ENCODE measurements at regions of chr14 and their contacts with region 1.

Region 1: DNA sequence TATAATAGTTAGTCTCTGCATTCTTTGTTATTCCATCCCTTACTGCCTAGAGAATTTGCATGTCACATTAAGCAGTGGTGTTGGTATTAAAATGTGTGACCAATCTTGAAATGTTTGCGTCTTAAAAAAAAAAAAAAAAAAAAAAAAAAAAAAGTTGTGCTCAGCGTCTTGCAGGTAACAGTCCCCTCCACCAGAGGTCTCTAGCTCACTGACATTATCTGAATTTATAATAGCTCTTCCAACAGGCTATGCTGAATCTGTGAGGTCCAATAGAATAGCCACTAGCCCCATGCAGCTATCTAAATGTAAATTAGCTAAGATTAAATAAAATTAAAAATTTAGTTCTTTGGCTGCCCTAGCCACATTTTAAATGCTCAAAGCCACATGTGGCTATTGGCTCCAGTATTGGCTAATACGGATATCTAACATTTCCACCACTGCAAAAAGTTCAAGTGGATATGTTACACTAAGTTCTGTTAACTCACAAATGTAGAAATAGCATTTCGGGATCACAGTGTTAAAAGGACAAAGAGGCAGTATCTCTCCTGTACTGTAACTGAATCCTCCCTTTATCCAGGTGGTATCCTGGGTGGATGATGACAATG is 28.7 kb downstream of the NKX2-8 start:
- DNase-seq: peak; percentile 17
- H3K4me3 ChIP-seq: no peak overlapping the region
- H3K27ac ChIP-seq: no peak overlapping the region
- H3K4me1 ChIP-seq: no peaks in the 10 kb centered on the region
- H3K27me3 ChIP-seq: no peaks in the 10 kb centered on the region
- CTCF ChIP-seq: peak; percentile 78 to 79

Region 2: GRCh38 chr14:35963209-35963608 is 590.5 kb before region 1 on chr14:
- CTCF ChIA-PET with region 1: no interaction called
- dilution Hi-C with region 1: no loop called
- in situ Hi-C with region 1: no loop called
- intact Hi-C with region 1: loop called (anchors 5 kb)
- DNase-seq: no peak
- H3K4me3 ChIP-seq: no peak overlapping the region
- H3K27ac ChIP-seq: no peak overlapping the region
- H3K4me1 ChIP-seq: no peaks in the 10 kb centered on the region
- H3K27me3 ChIP-seq: no peaks in the 10 kb centered on the region
- CTCF ChIP-seq: peak; percentile 48 to 57

Region 3: DNA sequence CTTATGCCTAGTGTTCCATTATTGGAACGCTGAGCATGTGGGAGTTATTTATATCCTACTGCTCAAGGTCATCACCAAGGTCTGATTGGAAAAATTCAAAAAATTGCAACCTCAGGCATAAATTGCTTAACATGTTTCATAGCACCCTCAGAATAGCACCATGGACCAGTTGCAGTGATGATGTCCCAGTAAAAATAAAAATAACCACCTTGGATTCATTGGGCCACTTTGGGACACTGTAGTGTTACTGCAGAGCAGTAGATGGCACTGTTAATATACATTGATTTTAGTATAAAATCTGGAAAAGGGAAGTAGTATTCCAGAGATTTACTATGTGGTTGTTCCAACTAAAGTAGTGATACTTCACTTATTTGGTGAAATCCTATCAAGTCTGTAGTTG is 346.3 kb before region 1 on chr14:
- CTCF ChIA-PET with region 1: no interaction called
- dilution Hi-C with region 1: no loop called
- in situ Hi-C with region 1: no loop called
- intact Hi-C with region 1: loop called (anchors 2 kb)
- DNase-seq: no peak
- H3K4me3 ChIP-seq: no peak overlapping the region
- H3K27ac ChIP-seq: no peak overlapping the region
- H3K4me1 ChIP-seq: no peaks in the 10 kb centered on the region
- H3K27me3 ChIP-seq: peaks cover 2% of the 10 kb centered on the region
- CTCF ChIP-seq: peak; percentile 35 to 52

Region 4: GRCh38 chr14:36478782-36479181 is 75.0 kb before region 1 on chr14:
- CTCF ChIA-PET with region 1: interaction called, 15 read pairs
- dilution Hi-C with region 1: no loop called
- in situ Hi-C with region 1: no loop called
- intact Hi-C with region 1: no loop called
- DNase-seq: peak; percentile 92
- H3K4me3 ChIP-seq: no peak overlapping the region
- H3K27ac ChIP-seq: no peak overlapping the region
- H3K4me1 ChIP-seq: no peaks in the 10 kb centered on the region
- H3K27me3 ChIP-seq: no peaks in the 10 kb centered on the region
- CTCF ChIP-seq: no peak

Region 5: GRCh38 chr14:36520601-36521525 is 32.9 kb before region 1 on chr14:
- CTCF ChIA-PET with region 1: no interaction called
- dilution Hi-C with region 1: no loop called
- in situ Hi-C with region 1: no loop called
- intact Hi-C with region 1: no loop called
- DNase-seq: peak; percentile 30
- H3K4me3 ChIP-seq: peak overlapping the region in 2 of 3 experiments; percentile 1 to 4
- H3K27ac ChIP-seq: no peak overlapping the region
- H3K4me1 ChIP-seq: peaks cover 16% of the 10 kb centered on the region
- H3K27me3 ChIP-seq: peaks cover 86% of the 10 kb centered on the region
- CTCF ChIP-seq: peak in 1 of 2 donors; percentile 43

Region 6: DNA sequence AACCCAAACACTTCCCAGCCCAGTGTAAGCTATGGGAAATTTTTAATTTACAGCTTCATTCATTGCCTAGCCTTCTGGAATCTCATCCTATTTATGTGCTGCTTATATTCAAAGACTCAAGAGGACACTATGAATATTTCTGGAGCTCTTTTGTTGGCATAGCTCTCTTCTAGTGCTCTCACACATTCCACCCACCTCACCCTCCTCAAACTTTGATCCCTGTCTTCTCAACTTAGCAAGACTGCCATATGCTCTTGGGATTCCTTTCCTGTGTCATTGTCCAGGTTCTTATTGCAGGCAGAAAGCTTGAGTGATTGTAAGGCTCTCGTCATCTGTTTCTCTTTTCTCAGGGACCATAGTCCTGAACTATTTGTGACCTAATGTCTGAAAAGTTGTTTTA is 15.7 kb before region 1 on chr14:
- CTCF ChIA-PET with region 1: no interaction called
- dilution Hi-C with region 1: no loop called
- in situ Hi-C with region 1: no loop called
- intact Hi-C with region 1: no loop called
- DNase-seq: no peak
- H3K4me3 ChIP-seq: no peak overlapping the region
- H3K27ac ChIP-seq: no peak overlapping the region
- H3K4me1 ChIP-seq: no peaks in the 10 kb centered on the region
- H3K27me3 ChIP-seq: peaks cover 8% of the 10 kb centered on the region
- CTCF ChIP-seq: no peak

Region 7: GRCh38 chr14:36747411-36748184 is 193.8 kb after region 1 on chr14:
- CTCF ChIA-PET with region 1: interaction called, 16 read pairs
- dilution Hi-C with region 1: no loop called
- in situ Hi-C with region 1: no loop called
- intact Hi-C with region 1: no loop called
- DNase-seq: no peak
- H3K4me3 ChIP-seq: no peak overlapping the region
- H3K27ac ChIP-seq: no peak overlapping the region
- H3K4me1 ChIP-seq: no peaks in the 10 kb centered on the region
- H3K27me3 ChIP-seq: peaks cover 4% of the 10 kb centered on the region
- CTCF ChIP-seq: peak; percentile 56 to 65

Region 8: GRCh38 chr14:37116933-37117849 is 563.4 kb after region 1 on chr14:
- CTCF ChIA-PET with region 1: interaction called, 11 read pairs
- dilution Hi-C with region 1: no loop called
- in situ Hi-C with region 1: no loop called
- intact Hi-C with region 1: no loop called
- DNase-seq: peak; percentile 68
- H3K4me3 ChIP-seq: no peak overlapping the region
- H3K27ac ChIP-seq: no peak overlapping the region
- H3K4me1 ChIP-seq: peaks cover 16% of the 10 kb centered on the region
- H3K27me3 ChIP-seq: no peaks in the 10 kb centered on the region
- CTCF ChIP-seq: peak; percentile 47 to 70